ENCODE measurements at regions of chr20 and their contacts with region 1.

Region 1: GRCh38 chr20:50750145-50750671 is 18.8 kb downstream of the PARD6B start:
- DNase-seq: no peak
- ATAC-seq: no peak
- H3K4me3 Mint-ChIP-seq: no peak overlapping the region
- H3K27ac Mint-ChIP-seq: no peak overlapping the region
- H3K4me1 Mint-ChIP-seq: peaks cover 20% of the 10 kb centered on the region
- H3K27me3 Mint-ChIP-seq: no peaks in the 10 kb centered on the region
- CTCF ChIP-seq: no peak

Region 2: DNA sequence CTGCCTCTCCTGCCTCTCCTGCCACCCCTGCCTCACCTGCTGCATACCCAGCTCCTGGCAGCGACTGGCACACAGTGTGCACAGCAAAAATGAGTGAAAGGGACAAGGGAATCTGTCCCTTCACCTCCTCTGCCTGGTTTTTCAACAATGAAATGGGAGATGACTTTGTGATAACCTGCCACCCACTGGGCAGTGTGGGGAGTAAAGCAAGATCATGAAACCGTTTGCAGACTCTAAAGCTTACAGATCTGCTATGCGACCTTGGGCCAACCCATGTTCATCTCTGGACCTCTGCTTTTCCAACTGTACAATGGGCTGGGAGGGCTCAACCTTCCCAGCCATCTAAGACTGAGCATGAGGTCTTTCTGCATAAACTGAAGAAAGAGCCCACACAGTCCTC is 140.0 kb before region 1 on chr20:
- CTCF ChIA-PET with region 1: no interaction called
- POLR2A ChIA-PET with region 1: no interaction called
- intact Hi-C with region 1: no loop called
- DNase-seq: no peak
- ATAC-seq: no peak
- H3K4me3 Mint-ChIP-seq: no peak overlapping the region
- H3K27ac Mint-ChIP-seq: no peak overlapping the region
- H3K4me1 Mint-ChIP-seq: no peaks in the 10 kb centered on the region
- H3K27me3 Mint-ChIP-seq: no peaks in the 10 kb centered on the region
- CTCF ChIP-seq: no peak

Region 3: GRCh38 chr20:50625986-50626677 is 124.1 kb before region 1 on chr20:
- CTCF ChIA-PET with region 1: interaction called, 23 read pairs
- POLR2A ChIA-PET with region 1: no interaction called
- intact Hi-C with region 1: no loop called
- DNase-seq: peak; percentile 53
- ATAC-seq: peak; percentile 69
- H3K4me3 Mint-ChIP-seq: no peak overlapping the region
- H3K27ac Mint-ChIP-seq: no peak overlapping the region
- H3K4me1 Mint-ChIP-seq: no peaks in the 10 kb centered on the region
- H3K27me3 Mint-ChIP-seq: no peaks in the 10 kb centered on the region
- CTCF ChIP-seq: peak; percentile 45

Region 4: GRCh38 chr20:50663095-50663850 is 86.9 kb before region 1 on chr20:
- CTCF ChIA-PET with region 1: interaction called, 14 read pairs
- POLR2A ChIA-PET with region 1: no interaction called
- intact Hi-C with region 1: loop called (anchors 10 kb)
- DNase-seq: peak; percentile 25
- ATAC-seq: no peak
- H3K4me3 Mint-ChIP-seq: no peak overlapping the region
- H3K27ac Mint-ChIP-seq: no peak overlapping the region
- H3K4me1 Mint-ChIP-seq: no peaks in the 10 kb centered on the region
- H3K27me3 Mint-ChIP-seq: peaks cover 3% of the 10 kb centered on the region
- CTCF ChIP-seq: no peak

Region 5: DNA sequence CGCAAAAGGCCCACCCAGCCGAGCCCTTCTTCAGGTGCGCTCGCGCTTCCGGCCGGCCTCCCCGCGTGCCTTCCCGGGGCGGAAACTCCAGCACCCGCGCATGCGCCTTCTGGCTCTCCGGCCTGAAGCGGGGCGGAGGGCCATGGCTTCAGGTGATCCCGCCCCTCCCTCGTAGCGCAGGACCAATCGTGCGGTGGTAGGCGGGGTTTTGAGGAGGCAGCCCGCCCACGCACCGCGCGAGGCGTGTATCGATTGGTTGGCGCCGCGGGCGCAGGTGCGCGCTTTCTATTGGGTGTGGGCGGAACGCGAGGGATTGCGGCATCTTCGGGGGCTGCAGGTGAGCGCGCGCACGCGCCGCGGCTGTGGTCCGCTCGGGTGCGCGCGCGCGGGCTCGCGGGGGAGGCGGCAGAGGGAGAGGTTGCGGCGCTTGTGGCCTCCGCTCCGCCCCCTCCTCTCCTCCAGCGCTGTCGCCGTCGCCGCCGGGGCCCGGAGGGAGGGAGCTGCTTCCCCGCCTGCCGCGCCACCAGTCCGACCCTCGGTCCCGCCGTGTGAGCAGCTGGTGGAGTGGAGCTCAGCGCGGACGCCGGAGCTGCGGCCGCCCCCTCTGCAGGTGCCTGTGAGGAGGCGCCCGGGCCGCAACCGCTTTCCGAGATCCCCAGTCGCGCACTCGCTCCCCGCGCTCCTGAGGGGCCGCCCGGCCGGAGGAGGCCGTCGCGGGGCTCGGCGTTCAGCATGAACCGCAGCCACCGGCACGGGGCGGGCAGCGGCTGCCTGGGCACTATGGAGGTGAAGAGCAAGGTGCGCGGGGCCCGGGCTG is 18.9 kb before region 1 on chr20 and contains the start of gene PARD6B:
- CTCF ChIA-PET with region 1: interaction called, 27 read pairs
- POLR2A ChIA-PET with region 1: interaction called, 3 read pairs
- intact Hi-C with region 1: loop called (anchors 2 kb)
- DNase-seq: peak; percentile 100
- ATAC-seq: peak; percentile 94
- H3K4me3 Mint-ChIP-seq: peak within 1 kb of the TSS; percentile 84
- H3K27ac Mint-ChIP-seq: peak within 1 kb of the TSS; percentile 55
- H3K4me1 Mint-ChIP-seq: peaks cover 37% of the 10 kb centered on the region
- H3K27me3 Mint-ChIP-seq: no peaks in the 10 kb centered on the region
- CTCF ChIP-seq: no peak
- total RNA-seq, gene PARD6B: 4.7 to 6.6 TPM

Region 6: DNA sequence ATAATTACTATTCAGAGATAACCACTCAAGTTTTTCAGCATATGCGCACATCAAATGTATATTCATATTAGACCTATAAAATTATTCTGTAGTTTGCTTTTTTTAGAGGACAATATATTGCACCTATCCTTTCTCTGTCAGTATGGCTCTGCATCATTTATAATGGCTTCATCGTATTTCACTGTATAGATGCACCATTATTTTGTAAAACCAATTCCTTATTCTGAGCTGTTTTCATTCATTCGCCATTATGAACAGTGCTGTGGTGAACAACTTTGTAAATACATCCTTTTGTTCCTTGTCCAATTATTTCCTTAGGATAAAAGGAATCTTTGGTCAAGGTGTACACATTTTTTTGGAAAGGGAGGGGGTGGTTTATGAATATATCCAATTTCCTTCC is 15.5 kb after region 1 on chr20:
- CTCF ChIA-PET with region 1: interaction called, 14 read pairs
- POLR2A ChIA-PET with region 1: interaction called, 6 read pairs
- intact Hi-C with region 1: no loop called
- DNase-seq: no peak
- ATAC-seq: no peak
- H3K4me3 Mint-ChIP-seq: no peak overlapping the region
- H3K27ac Mint-ChIP-seq: no peak overlapping the region
- H3K4me1 Mint-ChIP-seq: no peaks in the 10 kb centered on the region
- H3K27me3 Mint-ChIP-seq: peaks cover 3% of the 10 kb centered on the region
- CTCF ChIP-seq: no peak

Region 7: DNA sequence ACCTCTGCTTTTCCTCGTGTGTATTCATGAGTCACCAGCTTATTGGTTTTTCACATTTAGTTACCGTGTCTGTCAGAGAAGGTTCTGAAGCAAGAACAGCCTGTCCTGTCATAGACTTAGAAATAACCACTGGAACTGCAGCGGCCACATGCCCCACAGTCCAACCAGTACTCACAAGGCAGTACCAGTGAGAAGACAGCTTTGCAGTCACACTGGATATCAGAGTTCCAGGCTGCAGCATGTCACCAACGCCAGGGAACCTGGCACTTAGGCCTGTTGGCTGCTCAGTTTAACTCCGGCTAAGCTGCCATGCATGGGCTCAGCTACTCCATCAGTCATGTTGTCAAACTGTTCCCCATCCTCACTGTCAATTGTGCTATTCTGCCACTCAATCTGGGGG is 140.9 kb after region 1 on chr20:
- CTCF ChIA-PET with region 1: no interaction called
- POLR2A ChIA-PET with region 1: no interaction called
- intact Hi-C with region 1: no loop called
- DNase-seq: no peak
- ATAC-seq: peak; percentile 21
- H3K4me3 Mint-ChIP-seq: no peak overlapping the region
- H3K27ac Mint-ChIP-seq: peak overlapping the region; percentile 79
- H3K4me1 Mint-ChIP-seq: peaks cover 31% of the 10 kb centered on the region
- H3K27me3 Mint-ChIP-seq: no peaks in the 10 kb centered on the region
- CTCF ChIP-seq: no peak